ENCODE measurements at regions of chr20 and their contacts with region 1.

Region 1: GRCh38 chr20:53578492-53579222 is 15.0 kb downstream of the ZNF217 start:
- DNase-seq: no peak

Region 2: GRCh38 chr20:53425941-53426340 is 152.7 kb before region 1 on chr20:
- intact Hi-C with region 1: no loop called
- DNase-seq: no peak

Region 3: DNA sequence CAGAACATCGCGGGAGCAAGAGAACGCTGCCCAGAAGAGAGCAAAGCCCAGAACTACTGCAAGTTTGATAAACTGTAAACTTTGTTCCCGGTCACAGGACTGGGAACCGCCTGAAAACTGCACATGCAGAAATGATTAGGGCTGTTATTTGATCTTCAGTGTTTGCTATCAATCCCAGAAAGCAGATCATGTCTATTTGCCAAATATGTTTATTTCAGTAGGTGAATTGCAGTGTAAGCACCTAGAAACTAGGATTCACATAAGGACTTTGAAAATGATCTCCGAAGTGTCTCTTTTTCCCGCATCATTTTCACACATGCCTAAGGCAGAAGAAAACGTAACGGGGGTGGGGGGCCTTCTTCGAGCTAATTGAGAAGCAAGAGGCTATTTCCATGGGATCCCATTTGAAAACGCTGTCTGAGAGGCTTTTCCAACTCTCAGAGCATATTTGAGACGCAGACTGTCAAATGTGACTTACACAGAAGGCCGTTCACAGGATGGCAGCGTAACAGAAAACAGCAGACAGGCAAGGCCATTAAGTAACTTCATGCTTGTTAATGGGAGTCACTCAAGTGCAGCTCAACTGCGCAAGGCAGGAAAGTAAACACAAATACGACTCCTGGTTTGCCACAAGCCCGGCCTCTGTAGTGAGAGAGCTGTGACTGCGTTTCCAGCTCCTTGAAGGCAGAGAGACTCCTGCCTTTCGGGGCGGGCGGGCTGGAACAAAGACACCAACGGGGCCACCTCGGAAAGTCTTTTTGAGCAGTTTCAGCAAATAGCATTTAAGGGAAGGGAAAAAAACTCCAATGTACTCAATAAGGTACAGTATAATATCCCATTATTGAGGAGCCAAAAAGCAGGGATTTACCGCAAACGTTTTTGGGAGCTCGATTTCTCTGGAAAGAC is 159.6 kb after region 1 on chr20:
- intact Hi-C with region 1: loop called (anchors 5 kb)
- DNase-seq: peak; percentile 77

Region 4: GRCh38 chr20:53869466-53870258 is 291.0 kb after region 1 on chr20:
- intact Hi-C with region 1: loop called (anchors 5 kb)
- DNase-seq: no peak

Region 5: GRCh38 chr20:53939572-53940359 is 361.1 kb after region 1 on chr20:
- intact Hi-C with region 1: loop called (anchors 2 kb)
- DNase-seq: peak; percentile 94